CD4-positive, alpha-beta memory T cell (primary cell): ENCODE measurements at regions of chr15 and their contacts with region 1.

Region 1: GRCh38 chr15:42736793-42737528 is at the start of gene CDAN1:
- DNase-seq: peak; percentile 87 to 91 (median 89)
- H3K4me3 ChIP-seq: peak within 1 kb of the TSS; percentile 60 to 80
- H3K4me3 Mint-ChIP-seq: peak within 1 kb of the TSS; percentile 82 to 87 (median 84)
- H3K27ac ChIP-seq: peak within 1 kb of the TSS; percentile 82
- H3K27ac Mint-ChIP-seq: peak within 1 kb of the TSS; percentile 79 to 92 (median 87)
- H3K4me1 ChIP-seq: peaks cover 21% of the 10 kb centered on the region
- H3K4me1 Mint-ChIP-seq: peaks cover 6 to 29% (median 10%) of the 10 kb centered on the region in 4 donors
- H3K27me3 ChIP-seq: no peaks in the 10 kb centered on the region
- H3K27me3 Mint-ChIP-seq: no peaks in the 10 kb centered on the region
- total RNA-seq, gene CDAN1: 35.1 to 36.5 TPM

Region 2: DNA sequence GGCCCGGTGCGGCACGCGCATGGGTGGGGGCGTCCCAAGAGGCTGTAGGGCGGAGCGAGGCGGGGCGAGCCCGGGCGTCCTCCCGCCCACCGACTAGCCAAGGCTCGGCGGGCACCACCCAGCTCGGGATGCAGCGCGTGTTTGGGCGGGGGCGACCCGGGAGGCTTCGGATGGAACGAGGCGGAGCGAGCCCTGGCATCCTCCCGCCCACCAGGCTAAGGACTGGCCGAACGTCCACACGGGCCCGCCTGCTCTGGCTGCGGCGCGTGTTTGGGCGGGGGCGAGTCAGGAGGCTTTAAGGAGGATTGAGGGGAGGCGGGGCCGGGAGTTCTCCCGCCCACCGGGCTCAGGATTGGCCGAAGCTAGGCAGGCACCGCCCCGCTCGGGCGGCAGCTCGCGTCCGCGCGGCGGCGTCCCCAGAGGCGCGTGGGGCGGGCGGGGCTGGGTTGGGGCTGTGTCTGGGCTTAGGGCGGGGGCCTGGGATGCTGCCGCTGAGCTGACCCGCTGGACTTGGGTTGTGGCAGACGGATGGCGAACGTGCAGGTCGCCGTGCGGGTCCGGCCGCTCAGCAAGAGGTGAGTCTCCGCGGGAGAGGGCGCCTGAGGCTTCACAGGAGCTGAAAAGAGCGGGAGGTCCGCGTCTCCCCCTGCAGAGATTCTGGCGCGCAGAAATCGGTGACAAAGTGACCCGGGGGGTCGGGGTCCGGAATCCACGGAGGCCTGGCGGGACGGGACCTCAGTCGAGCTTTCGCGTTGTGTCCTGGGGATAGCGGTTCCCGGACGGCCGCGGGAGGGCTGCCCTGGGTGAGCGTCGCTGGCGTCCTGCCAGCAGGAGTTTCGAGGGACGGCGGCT is 161.5 kb before region 1 on chr15 and contains the start of gene STARD9:
- CTCF ChIA-PET with region 1: no interaction called
- POLR2A ChIA-PET with region 1: no interaction called
- intact Hi-C with region 1: loop called (anchors 5 kb)
- DNase-seq: peak; percentile 93 to 95 (median 93)
- H3K4me3 ChIP-seq: peak within 1 kb of the TSS; percentile 78 to 89
- H3K4me3 Mint-ChIP-seq: peak within 1 kb of the TSS; percentile 89 to 96 (median 92)
- H3K27ac ChIP-seq: peak within 1 kb of the TSS; percentile 44
- H3K27ac Mint-ChIP-seq: peak within 1 kb of the TSS; percentile 78 to 94 (median 86)
- H3K4me1 ChIP-seq: peaks cover 16% of the 10 kb centered on the region
- H3K4me1 Mint-ChIP-seq: peaks cover 11 to 34% (median 17%) of the 10 kb centered on the region in 4 donors
- H3K27me3 ChIP-seq: no peaks in the 10 kb centered on the region
- H3K27me3 Mint-ChIP-seq: peaks cover 6 to 12% of the 10 kb centered on the region in 2 donors
- total RNA-seq, gene STARD9: 4.5 to 6.1 TPM

Region 3: GRCh38 chr15:42723054-42723453 is 13.9 kb before region 1 on chr15:
- CTCF ChIA-PET with region 1: no interaction called
- POLR2A ChIA-PET with region 1: no interaction called
- intact Hi-C with region 1: no loop called
- DNase-seq: no peak
- H3K4me3 ChIP-seq: no peak overlapping the region
- H3K4me3 Mint-ChIP-seq: no peak overlapping the region
- H3K27ac ChIP-seq: no peak overlapping the region
- H3K27ac Mint-ChIP-seq: peak overlapping the region in 2 of 7 donors; percentile 42 to 46
- H3K4me1 ChIP-seq: no peaks in the 10 kb centered on the region
- H3K4me1 Mint-ChIP-seq: no peaks in the 10 kb centered on the region
- H3K27me3 ChIP-seq: no peaks in the 10 kb centered on the region
- H3K27me3 Mint-ChIP-seq: no peaks in the 10 kb centered on the region